ENCODE measurements at regions of chr22 and their contacts with region 1.

Region 1: GRCh38 chr22:43273902-43274484 is 69.2 kb downstream of the SCUBE1 start:
- DNase-seq: peak in 40 of 42 donors; percentile 18 to 77 (median 48)

Region 2: DNA sequence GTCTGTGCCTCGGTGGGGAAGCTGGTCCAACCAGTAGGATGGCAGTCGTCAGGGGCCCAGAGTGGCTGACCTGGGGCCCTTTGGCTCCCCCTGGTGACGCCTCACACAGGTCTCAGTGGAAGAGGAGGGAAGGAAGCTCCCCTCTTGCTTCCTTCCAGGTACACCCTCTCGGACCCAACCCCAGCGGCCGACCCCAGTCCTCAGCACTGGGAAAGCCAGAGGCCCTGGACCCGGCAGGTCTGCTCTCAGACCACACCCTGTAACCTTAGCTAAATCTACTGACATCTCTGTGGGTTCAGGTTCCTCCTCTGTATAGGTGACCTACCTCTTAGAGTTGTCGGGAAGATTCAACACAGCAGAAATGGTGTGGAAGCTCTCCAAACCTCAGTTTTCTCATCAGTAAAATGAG is 72.5 kb after region 1 on chr22:
- intact Hi-C with region 1: loop called (anchors 2 kb)
- DNase-seq: peak; percentile 9 to 79 (median 54)

Region 3: GRCh38 chr22:43385770-43386641 is 112.0 kb after region 1 on chr22:
- intact Hi-C with region 1: loop called (anchors 5 kb)
- DNase-seq: peak; percentile 66 to 92 (median 84)

Measured in head of caudate nucleus (tissue), 42 donors.